A673 (cell line): ENCODE measurements at regions of chr6 and their contacts with region 1.

Region 1: GRCh38 chr6:37210313-37210968 is 40.5 kb downstream of the PIM1 start:
- DNase-seq: peak; percentile 87
- H3K4me3 ChIP-seq: no peak overlapping the region
- H3K27ac ChIP-seq: no peak overlapping the region
- H3K4me1 ChIP-seq: no peaks in the 10 kb centered on the region
- H3K27me3 ChIP-seq: no peaks in the 10 kb centered on the region
- CTCF ChIP-seq: peak; percentile 91

Region 2: GRCh38 chr6:36765594-36766398 is 444.6 kb before region 1 on chr6:
- CTCF ChIA-PET with region 1: interaction called, 3 read pairs
- POLR2A ChIA-PET with region 1: no interaction called
- intact Hi-C with region 1: loop called (anchors 2 kb)
- DNase-seq: peak; percentile 82
- H3K4me3 ChIP-seq: no peak overlapping the region
- H3K27ac ChIP-seq: no peak overlapping the region
- H3K4me1 ChIP-seq: peaks cover 7% of the 10 kb centered on the region
- H3K27me3 ChIP-seq: no peaks in the 10 kb centered on the region
- CTCF ChIP-seq: peak; percentile 90

Region 3: DNA sequence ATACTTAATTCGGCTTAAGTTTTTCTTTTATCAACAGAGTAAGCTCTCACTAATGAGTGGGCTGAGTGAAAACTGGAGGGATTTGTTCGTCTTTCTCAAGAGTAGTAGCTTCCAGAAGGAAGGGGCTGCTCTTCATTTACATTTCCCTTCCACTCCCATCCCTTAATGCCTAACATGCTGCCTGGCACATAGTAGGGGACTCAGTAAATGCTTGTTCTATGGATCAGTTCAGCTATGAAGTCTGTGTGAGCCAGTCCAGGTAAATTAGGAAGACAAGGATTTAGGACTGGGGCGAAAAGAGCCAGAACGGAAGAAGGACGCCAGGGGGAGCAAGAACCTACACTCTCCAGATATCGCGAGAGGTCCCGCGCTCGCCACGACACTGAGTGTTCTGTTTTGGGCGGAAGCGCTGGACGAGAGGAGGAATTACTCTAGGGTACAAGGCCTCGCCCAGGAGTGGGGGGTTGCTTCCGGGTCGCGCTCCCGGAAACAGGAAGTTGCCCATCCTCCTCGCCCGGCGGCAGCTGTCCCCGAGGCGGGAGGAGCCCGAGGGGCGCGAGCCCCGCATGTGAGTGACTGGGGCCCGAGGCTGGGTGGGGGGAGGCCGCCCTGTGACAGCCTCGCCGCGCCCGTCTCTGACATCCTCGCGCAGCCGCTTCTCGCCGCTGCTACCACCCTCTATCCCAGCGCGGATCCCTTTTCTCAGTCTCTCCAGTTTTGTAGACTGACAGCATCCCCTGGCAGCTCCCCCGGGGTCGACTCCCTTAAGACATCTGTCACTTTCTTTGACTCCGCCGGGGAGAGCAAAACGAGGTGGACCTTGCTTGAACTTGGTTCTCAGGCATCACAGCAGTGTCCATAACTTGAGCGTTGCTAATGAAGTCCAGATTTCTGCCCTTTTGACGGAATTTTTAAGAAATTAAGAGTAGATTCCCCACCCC is 324.7 kb before region 1 on chr6 and contains the start of gene C6orf89:
- CTCF ChIA-PET with region 1: interaction called, 3 read pairs
- POLR2A ChIA-PET with region 1: no interaction called
- intact Hi-C with region 1: loop called (anchors 10 kb)
- DNase-seq: peak; percentile 99
- H3K4me3 ChIP-seq: peak within 1 kb of the TSS; percentile 72
- H3K27ac ChIP-seq: peak within 1 kb of the TSS; percentile 88
- H3K4me1 ChIP-seq: peaks cover 6% of the 10 kb centered on the region
- H3K27me3 ChIP-seq: no peaks in the 10 kb centered on the region
- CTCF ChIP-seq: peak; percentile 88
- total RNA-seq, gene C6orf89: 22.6 and 27.1 TPM in 2 replicates

Region 4: DNA sequence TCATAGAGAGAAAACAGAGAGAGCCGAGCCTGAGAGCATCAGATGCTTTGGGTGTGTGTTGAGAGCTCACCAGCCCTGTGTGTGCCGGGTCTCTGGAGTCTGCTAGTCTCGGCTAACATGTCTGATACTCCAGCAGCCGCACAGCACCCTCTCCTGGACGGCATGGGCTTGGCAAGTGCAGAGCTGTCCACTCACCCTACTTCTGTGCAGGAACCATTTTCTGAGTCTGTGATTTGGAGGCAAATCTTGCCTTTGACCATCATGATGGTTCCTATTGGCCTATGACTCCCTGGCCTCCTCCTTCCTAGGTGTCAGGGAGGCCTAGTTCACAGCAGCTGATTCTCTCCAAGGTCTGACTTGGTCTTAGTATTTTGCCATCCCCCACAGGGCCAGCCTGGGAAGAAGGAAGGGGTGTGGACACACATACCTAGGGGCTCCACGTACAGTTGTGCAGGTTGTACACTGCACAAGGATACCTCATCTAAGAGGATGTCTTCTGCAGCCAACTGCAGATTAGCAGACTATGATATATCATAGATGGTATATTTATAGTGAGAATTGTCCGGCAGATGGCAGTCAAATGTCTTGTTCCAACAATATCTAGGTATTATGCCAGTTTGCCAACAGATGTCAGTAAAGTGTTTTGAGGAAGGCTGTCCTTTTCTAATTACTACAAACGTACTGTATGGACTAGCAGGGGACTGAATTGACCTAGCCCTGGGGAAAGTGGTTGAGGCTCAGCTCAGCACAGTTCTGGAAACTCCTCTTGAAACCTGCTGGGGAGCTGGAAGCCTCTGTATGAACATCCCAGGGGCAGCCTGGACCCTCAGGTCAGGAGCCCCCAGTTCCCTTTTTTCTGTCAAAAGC is 192.0 kb before region 1 on chr6:
- CTCF ChIA-PET with region 1: interaction called, 68 read pairs
- POLR2A ChIA-PET with region 1: no interaction called
- intact Hi-C with region 1: loop called (anchors 1 kb)
- DNase-seq: peak; percentile 89
- H3K4me3 ChIP-seq: no peak overlapping the region
- H3K27ac ChIP-seq: no peak overlapping the region
- H3K4me1 ChIP-seq: no peaks in the 10 kb centered on the region
- H3K27me3 ChIP-seq: no peaks in the 10 kb centered on the region
- CTCF ChIP-seq: peak; percentile 87

Region 5: DNA sequence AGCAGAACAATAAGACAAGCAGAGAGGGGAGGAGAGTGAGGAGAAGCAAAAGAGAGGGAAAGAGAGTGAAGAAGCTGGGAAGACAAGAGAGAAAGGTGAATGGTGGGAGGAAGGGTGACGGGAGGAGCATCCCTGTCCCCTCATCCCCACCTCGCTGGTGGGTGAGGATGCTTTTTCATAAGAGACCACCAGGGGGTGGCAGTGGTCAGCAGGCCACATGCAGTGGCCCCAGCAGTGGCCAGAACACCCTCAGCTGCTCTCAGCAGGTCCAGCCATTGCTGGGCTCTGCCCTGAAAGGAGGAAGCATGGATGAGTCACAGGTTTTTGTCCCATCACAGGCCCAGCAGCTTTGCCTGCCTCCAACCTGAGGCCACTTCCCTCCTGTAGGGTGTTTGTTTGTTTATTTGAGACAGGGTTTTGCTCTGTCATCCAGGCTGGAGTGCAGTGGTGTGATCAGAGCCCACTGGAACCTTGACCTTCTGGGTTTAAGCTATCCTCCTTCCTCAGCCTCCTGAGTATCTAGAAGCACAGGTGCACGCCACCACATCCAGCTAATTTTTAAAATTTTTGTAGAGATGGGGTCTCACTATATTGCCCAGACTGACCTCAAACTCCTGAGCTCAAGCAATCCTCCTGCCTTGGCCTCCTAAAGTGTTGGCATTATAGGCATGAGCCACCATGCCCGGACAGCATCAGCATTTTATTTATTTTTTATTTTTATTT is 181.0 kb before region 1 on chr6:
- CTCF ChIA-PET with region 1: interaction called, 17 read pairs
- POLR2A ChIA-PET with region 1: no interaction called
- intact Hi-C with region 1: no loop called
- DNase-seq: peak; percentile 46
- H3K4me3 ChIP-seq: no peak overlapping the region
- H3K27ac ChIP-seq: no peak overlapping the region
- H3K4me1 ChIP-seq: no peaks in the 10 kb centered on the region
- H3K27me3 ChIP-seq: no peaks in the 10 kb centered on the region
- CTCF ChIP-seq: peak; percentile 67

Region 6: DNA sequence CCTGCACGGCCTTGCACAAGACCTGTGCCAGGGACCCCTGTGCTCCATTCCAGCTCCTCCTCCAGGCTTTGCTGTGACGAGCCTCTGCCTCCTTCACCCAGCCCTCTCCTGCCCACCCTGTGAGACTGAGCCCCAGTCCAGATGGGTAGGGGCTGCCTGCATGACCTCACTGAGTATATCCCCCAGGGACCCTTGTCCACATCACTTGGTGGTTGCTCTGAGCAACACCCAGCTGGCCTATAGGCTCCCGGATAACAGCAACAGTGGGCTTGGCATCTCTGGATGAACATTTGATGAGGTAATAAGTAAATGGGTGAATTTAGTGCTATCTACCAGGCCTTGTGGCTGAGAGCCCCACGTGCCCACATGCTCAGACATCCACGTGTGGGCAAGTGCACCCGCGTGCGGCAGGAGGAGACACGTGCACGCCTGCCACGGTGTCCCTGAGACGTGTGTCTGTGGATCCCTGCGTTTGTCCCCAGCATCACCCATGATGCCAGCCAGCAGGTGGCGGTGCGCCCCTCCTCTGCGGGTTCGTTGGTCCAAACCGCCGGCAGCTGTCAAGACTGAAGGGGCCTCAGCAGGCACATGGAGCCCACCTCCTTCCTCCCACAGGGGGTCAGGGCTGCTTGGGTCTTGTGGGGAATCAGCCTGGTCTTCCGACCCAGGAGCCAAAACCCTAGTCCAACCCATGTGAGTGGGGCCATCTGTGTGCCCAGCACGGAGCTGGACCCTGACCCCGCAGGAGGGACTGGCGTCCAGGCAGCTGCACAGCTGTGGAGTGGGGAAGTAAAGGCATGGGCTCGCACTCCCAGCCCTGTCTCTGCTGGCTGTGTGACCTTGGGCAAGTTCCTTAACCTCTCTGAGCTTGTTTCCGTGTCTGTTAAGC is 159.1 kb before region 1 on chr6:
- CTCF ChIA-PET with region 1: interaction called, 22 read pairs
- POLR2A ChIA-PET with region 1: no interaction called
- intact Hi-C with region 1: loop called (anchors 1 kb)
- DNase-seq: peak; percentile 89
- H3K4me3 ChIP-seq: no peak overlapping the region
- H3K27ac ChIP-seq: no peak overlapping the region
- H3K4me1 ChIP-seq: no peaks in the 10 kb centered on the region
- H3K27me3 ChIP-seq: no peaks in the 10 kb centered on the region
- CTCF ChIP-seq: peak; percentile 92

Region 7: GRCh38 chr6:37756135-37756534 is 545.7 kb after region 1 on chr6:
- CTCF ChIA-PET with region 1: no interaction called
- POLR2A ChIA-PET with region 1: no interaction called
- intact Hi-C with region 1: no loop called
- DNase-seq: no peak
- H3K4me3 ChIP-seq: no peak overlapping the region
- H3K27ac ChIP-seq: no peak overlapping the region
- H3K4me1 ChIP-seq: no peaks in the 10 kb centered on the region
- H3K27me3 ChIP-seq: no peaks in the 10 kb centered on the region
- CTCF ChIP-seq: no peak